ENCODE measurements at regions of chr21 and their contacts with region 1.

Region 1: GRCh38 chr21:31117128-31117916 is 79.0 kb upstream of the KRTAP19-8 start:
- DNase-seq: peak; percentile 32
- ATAC-seq: peak; percentile 83
- H3K4me3 Mint-ChIP-seq: no peak overlapping the region
- H3K27ac Mint-ChIP-seq: peak overlapping the region; percentile 30
- H3K4me1 Mint-ChIP-seq: peaks cover 15% of the 10 kb centered on the region
- H3K27me3 Mint-ChIP-seq: no peaks in the 10 kb centered on the region

Region 2: DNA sequence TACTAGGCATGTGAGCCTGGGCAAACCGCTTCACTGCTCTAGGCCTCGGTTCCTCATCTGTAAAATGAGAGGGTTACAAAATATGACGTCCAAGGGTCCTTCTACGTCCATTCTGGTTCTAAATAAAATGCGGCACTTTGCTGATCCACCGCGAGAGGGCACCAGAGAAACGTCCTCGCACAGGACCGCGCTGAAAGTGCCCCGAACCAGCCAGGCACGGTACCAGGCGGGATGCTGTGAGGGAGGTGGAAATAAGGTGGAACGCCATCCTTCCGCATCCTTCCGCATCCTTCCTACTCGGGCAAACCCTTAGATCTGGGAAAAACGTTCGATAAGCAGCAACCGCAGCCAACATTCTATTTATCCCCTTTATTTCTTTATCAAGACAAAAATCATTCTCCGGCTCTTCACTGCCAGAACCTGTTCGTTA is 18.7 kb before region 1 on chr21:
- CTCF ChIA-PET with region 1: interaction called, 11 read pairs
- POLR2A ChIA-PET with region 1: no interaction called
- intact Hi-C with region 1: no loop called
- DNase-seq: peak; percentile 86
- ATAC-seq: peak; percentile 89
- H3K4me3 Mint-ChIP-seq: no peak overlapping the region
- H3K27ac Mint-ChIP-seq: peak overlapping the region; percentile 38
- H3K4me1 Mint-ChIP-seq: peaks cover 21% of the 10 kb centered on the region
- H3K27me3 Mint-ChIP-seq: peaks cover 3% of the 10 kb centered on the region